Activated naive CD4-positive, alpha-beta T cell treated with anti-CD3 and anti-CD28 coated beads for 36 hours (primary cell): ENCODE measurements at regions of chr21 and their contacts with region 1.

Region 1: GRCh38 chr21:15552914-15553494 is 176.8 kb upstream of the USP25 start:
- DNase-seq: no peak
- H3K4me3 Mint-ChIP-seq: no peak overlapping the region
- H3K27ac Mint-ChIP-seq: no peak overlapping the region
- H3K4me1 Mint-ChIP-seq: peaks cover 15% of the 10 kb centered on the region
- H3K27me3 Mint-ChIP-seq: no peaks in the 10 kb centered on the region

Region 2: DNA sequence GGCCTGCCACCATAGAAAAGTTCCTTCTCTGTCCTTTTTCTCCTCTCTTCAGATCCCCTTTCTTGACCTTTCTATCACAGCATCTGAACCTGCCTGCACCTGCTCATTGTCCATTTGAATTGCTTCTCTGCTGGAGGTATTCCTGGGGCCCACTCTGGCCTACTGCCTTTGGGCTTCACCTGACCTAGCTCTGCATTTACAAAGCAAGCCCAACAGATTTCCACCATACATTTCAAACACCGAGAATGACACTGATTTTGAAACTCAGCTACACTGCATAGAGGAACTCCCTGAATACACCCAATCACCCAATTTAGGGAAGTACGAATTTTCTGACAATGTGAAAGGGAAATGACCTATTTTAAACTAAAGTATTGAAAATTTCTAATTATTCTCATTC is 107.7 kb before region 1 on chr21:
- CTCF ChIA-PET with region 1: no interaction called
- intact Hi-C with region 1: no loop called
- DNase-seq: no peak
- H3K4me3 Mint-ChIP-seq: no peak overlapping the region
- H3K27ac Mint-ChIP-seq: no peak overlapping the region
- H3K4me1 Mint-ChIP-seq: peaks cover 7% of the 10 kb centered on the region
- H3K27me3 Mint-ChIP-seq: no peaks in the 10 kb centered on the region

Region 3: DNA sequence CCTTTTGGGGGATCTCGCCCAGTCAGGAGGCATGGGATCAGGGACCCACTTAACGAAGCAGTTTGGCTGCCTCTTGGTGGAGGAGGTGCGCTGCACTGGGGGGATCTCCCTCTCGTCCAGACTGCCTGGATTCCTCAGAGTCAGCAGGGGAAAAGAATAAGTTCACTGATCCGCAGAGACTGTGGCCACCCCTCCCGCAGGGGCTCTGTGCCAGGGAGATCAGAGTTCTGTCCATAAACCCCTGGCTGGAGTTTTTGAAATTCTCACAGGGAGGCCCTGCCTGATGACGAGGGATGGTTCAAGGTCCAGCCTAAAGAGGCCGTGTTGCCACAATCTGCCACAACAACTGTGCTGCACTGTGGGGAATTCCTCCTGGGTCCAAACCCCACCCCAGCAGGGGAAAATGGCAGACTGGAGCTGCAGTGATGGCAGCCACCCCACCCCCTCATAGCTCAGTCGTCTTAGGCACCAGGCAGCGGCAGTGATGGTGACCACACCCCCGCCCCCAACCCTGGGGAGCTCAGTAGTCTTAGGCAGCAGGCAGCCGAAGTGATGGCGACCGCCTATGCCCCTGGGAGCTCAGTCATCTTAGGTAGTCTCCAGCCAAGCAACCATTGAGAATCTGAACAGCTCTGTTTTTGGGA is 97.1 kb before region 1 on chr21:
- CTCF ChIA-PET with region 1: no interaction called
- intact Hi-C with region 1: no loop called
- DNase-seq: no peak
- H3K4me3 Mint-ChIP-seq: no peak overlapping the region
- H3K27ac Mint-ChIP-seq: no peak overlapping the region
- H3K4me1 Mint-ChIP-seq: no peaks in the 10 kb centered on the region
- H3K27me3 Mint-ChIP-seq: peaks cover 2% of the 10 kb centered on the region

Region 4: DNA sequence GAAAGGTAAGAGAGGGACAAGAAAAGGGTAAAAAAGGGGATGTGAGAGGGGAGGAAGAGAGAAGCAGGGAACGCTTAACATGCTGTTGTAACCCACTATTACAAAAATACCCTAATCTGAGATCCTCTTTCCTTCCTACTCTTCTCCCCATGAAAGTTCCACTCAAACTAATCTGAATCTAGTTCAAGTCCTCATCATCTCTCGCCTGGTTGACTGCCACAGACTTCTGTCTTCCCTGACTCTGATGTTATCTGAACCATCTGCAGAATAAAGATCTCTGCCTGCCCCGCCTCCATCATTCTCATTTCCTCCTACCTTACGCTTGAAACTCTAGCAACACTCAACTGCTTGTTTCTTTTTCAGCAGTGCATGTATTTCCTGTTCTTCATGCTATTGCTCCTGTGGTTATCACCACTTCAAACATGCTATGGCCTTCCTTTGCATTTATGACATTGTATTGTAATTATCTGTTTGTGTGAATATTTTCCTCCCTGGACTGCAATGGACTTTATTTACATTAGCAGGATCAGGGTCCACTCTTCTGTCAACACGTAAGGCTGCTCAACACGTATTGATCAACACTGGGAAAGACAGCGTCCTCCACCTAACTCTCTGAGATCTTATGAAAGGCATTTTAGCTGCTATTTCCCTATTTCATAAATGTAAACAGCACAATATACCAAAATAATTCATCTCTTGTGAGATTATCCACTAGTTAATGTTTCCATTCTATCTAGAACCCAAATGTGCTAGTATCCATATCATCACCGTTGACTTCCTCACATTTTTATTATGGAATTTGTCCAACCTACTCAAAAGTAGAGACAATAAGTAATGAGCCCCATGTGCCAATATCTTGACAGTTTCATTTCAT is 38.7 kb before region 1 on chr21:
- CTCF ChIA-PET with region 1: interaction called, 15 read pairs
- intact Hi-C with region 1: loop called (anchors 2 kb)
- DNase-seq: peak; percentile 72
- H3K4me3 Mint-ChIP-seq: peak overlapping the region; percentile 55
- H3K27ac Mint-ChIP-seq: peak overlapping the region; percentile 85
- H3K4me1 Mint-ChIP-seq: peaks cover 28% of the 10 kb centered on the region
- H3K27me3 Mint-ChIP-seq: no peaks in the 10 kb centered on the region

Region 5: DNA sequence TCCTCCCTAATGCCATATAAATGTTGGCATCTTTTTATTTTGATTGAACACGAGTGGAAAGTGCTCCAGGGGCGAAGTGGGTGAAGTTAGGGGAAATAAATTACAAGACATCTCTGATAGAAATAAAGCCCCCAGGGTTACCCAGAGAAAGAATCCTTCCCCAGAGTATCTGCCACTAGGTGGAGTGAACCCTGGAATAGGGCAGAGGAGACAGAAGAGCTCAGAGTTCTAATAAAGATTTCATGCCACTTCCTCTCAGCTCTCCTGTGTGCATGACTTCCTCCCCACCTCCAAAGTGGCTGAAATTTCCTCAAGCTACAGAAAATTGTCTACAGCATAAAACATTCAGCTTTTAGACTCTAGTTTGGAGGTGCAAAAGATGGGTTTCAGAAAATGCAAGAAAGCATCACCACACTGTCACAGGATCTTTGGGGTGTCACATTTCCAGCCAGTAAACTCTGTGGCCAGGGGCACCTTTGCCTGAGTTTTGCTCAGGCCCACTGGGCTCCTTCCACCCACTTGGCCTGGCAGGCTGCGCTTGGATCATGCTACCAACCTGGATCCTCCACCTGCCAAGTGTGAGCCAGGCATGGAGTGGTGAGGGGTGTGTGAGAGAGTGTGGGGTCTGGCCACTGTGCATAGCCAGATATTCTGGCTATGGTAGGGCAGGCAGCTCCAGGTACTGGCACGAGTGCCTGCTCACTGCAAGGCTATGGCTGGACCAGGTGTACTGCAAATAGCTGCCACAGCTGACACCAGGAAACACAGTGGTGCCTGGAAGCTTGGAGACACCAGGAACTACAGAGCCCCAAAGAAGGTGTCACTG is 32.0 kb before region 1 on chr21:
- CTCF ChIA-PET with region 1: interaction called, 15 read pairs
- intact Hi-C with region 1: no loop called
- DNase-seq: no peak
- H3K4me3 Mint-ChIP-seq: no peak overlapping the region
- H3K27ac Mint-ChIP-seq: no peak overlapping the region
- H3K4me1 Mint-ChIP-seq: peaks cover 39% of the 10 kb centered on the region
- H3K27me3 Mint-ChIP-seq: no peaks in the 10 kb centered on the region